Common myeloid progenitor, CD34-positive (primary cell): ENCODE measurements at regions of chr2 and their contacts with region 1.

Region 1: DNA sequence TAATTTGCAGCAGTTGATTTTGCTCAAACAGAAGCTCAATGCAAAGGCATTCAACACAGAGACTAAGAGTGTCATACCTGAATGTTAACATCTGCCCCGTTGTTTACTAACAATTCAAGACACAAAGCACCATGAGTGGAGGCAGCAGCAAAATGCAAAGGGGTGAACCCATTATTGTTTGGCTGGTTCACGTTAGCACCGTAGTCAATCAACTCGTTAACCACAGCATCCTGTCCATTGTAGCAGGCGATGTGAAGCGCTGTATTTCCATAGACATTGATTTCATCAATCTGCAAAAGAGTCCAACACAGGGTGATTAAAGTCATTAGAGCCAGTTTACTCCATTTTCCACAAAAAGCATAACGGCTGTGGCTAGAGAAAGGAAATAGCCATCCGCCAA is 189.3 kb downstream of the ANKRD44 start:
- DNase-seq: no peak
- H3K4me3 ChIP-seq: no peak overlapping the region
- H3K27ac ChIP-seq: no peak overlapping the region
- H3K4me1 ChIP-seq: peaks cover 0 to 9% (median 1%) of the 10 kb centered on the region in 4 experiments
- H3K27me3 ChIP-seq: no peaks in the 10 kb centered on the region

Region 2: DNA sequence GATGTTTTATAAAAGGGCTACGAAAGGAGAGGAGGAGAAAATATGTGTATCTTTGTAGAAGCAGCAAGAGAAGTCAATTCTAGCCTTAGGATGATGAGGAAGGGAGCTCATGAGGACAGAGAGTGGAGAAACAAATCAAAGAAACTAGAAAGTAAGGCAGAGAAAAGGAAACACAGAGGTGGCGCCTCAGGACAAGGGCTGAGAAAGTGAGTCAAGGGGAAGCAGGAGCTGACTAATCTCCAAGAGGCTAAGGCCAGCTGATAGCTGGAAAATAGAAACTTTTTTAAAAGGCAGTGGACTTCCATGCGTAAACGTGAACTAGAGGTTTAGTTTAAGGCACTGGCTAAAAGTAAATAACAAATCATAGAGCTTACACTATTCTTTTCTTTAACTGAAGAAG is 16.0 kb after region 1 on chr2:
- CTCF ChIA-PET with region 1: interaction called, 14 read pairs
- POLR2A ChIA-PET with region 1: no interaction called
- DNase-seq: no peak
- H3K4me3 ChIP-seq: no peak overlapping the region
- H3K27ac ChIP-seq: no peak overlapping the region
- H3K4me1 ChIP-seq: peaks cover 7 to 22% (median 12%) of the 10 kb centered on the region in 4 experiments
- H3K27me3 ChIP-seq: no peaks in the 10 kb centered on the region